Ascending aorta (tissue), 2 donors: ENCODE measurements at regions of chr5 and their contacts with region 1.

Region 1: GRCh38 chr5:158832096-158832685 is 267.5 kb downstream of the EBF1 start:
- DNase-seq: no peak
- H3K4me3 ChIP-seq: no peak overlapping the region
- H3K27ac ChIP-seq: no peak overlapping the region
- H3K4me1 ChIP-seq: no peaks in the 10 kb centered on the region
- H3K27me3 ChIP-seq: no peaks in the 10 kb centered on the region
- CTCF ChIP-seq: no peak

Region 2: DNA sequence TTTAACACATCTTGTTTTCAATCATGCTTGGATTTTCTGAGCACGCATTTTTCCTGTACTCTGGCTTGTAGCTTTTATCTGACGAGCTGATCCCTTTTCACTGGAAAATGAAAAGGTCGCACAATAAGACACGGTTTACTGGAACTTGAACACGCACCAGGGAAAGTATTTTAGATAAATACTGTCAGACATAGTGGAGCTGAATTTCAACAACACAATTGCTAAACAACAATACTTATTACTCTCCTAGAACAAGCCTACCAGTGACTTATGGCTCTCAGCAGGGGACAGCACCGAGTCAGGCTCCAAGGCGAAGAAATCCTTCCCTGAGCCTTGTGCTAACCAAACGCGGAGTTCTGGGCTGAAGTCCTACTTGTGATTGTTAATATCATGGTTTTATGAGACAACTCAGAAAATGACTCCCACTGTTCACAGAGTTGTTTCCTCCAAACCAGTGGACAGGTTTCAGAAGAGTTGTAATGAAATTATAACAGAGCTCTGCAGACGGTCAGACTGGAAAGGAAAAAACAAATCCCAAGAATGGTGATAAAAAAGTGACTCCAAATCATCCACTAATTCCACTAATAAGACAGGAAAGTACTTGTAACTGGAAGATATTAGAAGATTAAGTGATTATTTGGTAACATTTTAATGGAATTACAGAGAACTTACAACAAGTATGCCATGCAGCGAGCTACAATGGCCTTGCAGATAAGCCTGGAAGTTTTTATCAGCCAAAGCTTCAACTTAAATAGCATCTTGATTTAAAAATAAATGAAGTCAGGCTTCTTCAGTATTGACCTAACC is 92.0 kb before region 1 on chr5:
- intact Hi-C with region 1: no loop called
- DNase-seq: peak in 1 of 2 donors; percentile 68
- H3K4me3 ChIP-seq: peak overlapping the region in 1 of 2 donors; percentile 13
- H3K27ac ChIP-seq: peak overlapping the region; percentile 15 to 30
- H3K4me1 ChIP-seq: peaks cover 3 to 20% of the 10 kb centered on the region in 2 donors
- H3K27me3 ChIP-seq: no peaks in the 10 kb centered on the region
- CTCF ChIP-seq: peak; percentile 29 to 64 (median 45)

Region 3: DNA sequence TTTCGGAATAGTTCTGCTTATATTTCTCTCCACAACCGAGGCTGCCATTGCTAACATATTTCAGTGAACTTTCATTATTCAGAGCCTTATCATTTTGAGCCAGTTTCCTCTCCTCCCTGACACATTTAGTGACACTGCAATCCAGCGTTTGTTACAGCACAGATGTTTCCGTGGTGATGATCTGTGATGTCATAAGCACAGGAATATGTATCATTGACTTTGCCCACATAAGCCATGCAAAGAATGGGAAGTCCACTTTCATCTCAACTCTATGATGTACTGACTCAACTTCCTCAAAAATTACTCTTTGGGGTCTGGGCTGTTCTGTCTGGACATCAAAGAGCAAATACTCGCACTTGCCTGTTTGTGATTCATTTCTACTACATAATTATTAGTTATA is 24.2 kb before region 1 on chr5:
- intact Hi-C with region 1: loop called (anchors 2 kb)
- DNase-seq: no peak
- H3K4me3 ChIP-seq: no peak overlapping the region
- H3K27ac ChIP-seq: peak overlapping the region; percentile 9 to 54
- H3K4me1 ChIP-seq: peaks cover 3 to 27% of the 10 kb centered on the region in 2 donors
- H3K27me3 ChIP-seq: no peaks in the 10 kb centered on the region
- CTCF ChIP-seq: no peak